Activated B cell treated with CpG ODN at 0.5 μM for 24 hours (primary cell): ENCODE measurements at regions of chr1 and their contacts with region 1.

Region 1: DNA sequence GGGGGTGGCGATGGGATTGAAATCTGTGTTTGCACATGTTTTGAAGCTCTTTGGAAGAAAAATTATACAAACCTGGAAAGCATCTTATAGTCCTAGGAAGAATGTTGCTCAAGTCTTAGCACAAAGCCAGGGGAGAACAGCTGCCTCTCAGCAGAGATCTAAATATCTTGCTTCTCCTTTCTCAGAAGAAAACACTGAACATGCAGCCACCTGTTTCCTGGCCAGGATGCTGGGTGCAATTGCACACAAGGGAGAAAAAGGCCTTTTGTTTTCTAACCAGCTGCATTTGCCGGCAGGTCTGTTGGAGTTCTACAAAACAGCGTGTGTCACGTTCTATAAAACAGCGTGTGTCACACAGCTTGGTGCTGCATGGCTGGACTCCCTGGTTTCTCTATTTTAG is 259.6 kb upstream of the PLD5 start:
- DNase-seq: no peak
- ATAC-seq: peak; percentile 80
- H3K4me3 Mint-ChIP-seq: peak overlapping the region; percentile 61
- H3K27ac Mint-ChIP-seq: peak overlapping the region; percentile 94
- H3K4me1 Mint-ChIP-seq: peaks cover 66% of the 10 kb centered on the region
- H3K27me3 Mint-ChIP-seq: no peaks in the 10 kb centered on the region
- CTCF ChIP-seq: no peak

Region 2: DNA sequence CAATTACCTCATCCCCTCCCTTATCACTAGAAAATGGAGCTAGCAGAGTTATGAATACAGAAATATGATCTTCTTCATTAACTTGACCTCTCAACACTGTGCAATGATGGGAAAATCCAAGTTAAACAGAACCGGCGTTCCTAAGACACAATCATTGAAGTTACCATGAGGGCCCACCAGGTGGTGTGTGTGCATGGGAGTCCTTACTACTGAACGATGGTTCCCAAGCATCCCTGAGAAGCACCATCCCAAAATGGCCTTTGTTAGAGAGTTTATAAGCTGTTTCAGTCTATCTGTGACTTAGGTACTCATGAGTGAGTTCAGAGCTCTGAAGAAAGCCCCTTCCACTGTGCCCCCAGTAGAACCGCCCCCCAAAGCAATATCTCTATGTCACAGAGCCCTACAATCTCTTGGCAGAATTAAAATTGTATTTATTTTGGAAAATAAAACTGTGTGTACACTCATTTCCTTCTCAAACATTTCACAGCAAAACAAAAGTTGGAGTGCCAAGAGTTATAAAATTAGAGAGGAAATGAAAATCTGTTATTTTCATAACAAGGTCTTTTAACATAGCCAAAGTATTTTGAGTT is 316.4 kb before region 1 on chr1:
- CTCF ChIA-PET with region 1: no interaction called
- POLR2A ChIA-PET with region 1: no interaction called
- intact Hi-C with region 1: loop called (anchors 5 kb)
- DNase-seq: no peak
- ATAC-seq: peak; percentile 37
- H3K4me3 Mint-ChIP-seq: no peak overlapping the region
- H3K27ac Mint-ChIP-seq: no peak overlapping the region
- H3K4me1 Mint-ChIP-seq: peaks cover 4% of the 10 kb centered on the region
- H3K27me3 Mint-ChIP-seq: peaks cover 9% of the 10 kb centered on the region
- CTCF ChIP-seq: no peak

Region 3: DNA sequence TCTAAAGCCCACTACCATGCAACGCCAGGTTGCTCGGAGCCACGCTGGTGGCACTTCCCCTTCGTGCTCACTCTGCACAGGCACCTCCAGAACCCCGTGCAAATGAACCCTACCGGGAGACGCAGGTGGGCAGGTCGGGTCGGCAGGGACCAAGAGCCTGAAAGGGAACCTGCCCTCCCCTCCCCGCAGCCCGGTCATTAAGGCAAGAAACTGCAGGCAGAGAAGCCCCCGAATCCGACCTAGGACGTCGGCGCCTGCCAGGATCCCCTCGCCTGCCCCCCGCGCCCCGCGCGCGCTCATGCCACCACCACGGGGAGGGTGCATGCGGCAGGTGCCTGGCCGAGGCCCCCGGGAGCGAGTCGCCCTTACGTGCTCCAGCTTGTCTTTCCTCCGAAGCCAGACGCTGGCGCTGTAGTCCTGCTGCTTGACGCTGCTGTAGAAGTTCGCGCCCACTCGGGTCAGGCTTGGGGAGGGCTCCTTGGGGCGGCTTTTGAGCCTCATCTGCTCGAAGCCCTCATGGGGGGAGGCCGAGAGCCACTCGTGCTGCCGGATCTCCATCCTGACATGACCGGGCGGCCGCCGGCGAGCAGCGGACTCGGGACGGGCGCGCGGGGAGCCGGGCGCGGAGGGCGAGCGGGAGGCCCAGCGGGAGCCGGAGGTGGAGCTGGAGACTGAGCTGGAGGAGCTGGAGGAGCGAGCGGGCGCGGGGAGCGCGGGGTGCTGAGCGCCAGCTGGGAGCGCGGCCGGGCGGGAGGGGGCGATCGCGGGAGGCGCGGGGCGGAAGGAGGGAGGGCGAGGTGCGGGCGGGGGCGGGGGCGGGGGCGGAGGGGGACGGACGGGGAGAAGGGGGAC is 260.1 kb before region 1 on chr1:
- CTCF ChIA-PET with region 1: no interaction called
- POLR2A ChIA-PET with region 1: no interaction called
- intact Hi-C with region 1: loop called (anchors 10 kb)
- DNase-seq: peak; percentile 24
- ATAC-seq: peak; percentile 62
- H3K4me3 Mint-ChIP-seq: peak overlapping the region; percentile 78
- H3K27ac Mint-ChIP-seq: no peak overlapping the region
- H3K4me1 Mint-ChIP-seq: peaks cover 20% of the 10 kb centered on the region
- H3K27me3 Mint-ChIP-seq: peaks cover 51% of the 10 kb centered on the region
- CTCF ChIP-seq: no peak

Region 4: DNA sequence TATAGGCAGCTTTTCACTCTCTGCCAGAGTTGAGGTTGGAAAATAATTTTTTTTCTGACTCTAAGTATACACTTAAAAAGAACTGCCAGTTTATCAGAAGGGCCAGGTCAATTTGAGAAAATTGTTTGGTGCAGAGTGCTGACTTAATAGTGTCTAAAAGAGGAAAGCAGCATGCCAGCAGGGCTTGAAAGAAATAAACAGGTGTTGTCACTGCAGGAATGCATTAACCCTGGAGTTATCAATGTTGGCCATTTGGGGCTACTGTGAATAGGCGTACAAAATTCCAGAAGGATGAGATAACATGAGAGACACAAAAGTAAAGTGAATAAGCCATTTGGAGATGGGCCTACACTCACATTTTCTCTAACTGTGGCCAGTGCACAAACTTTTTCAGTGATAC is 39.0 kb before region 1 on chr1:
- CTCF ChIA-PET with region 1: no interaction called
- POLR2A ChIA-PET with region 1: no interaction called
- intact Hi-C with region 1: no loop called
- DNase-seq: no peak
- ATAC-seq: no peak
- H3K4me3 Mint-ChIP-seq: no peak overlapping the region
- H3K27ac Mint-ChIP-seq: no peak overlapping the region
- H3K4me1 Mint-ChIP-seq: peaks cover 6% of the 10 kb centered on the region
- H3K27me3 Mint-ChIP-seq: no peaks in the 10 kb centered on the region
- CTCF ChIP-seq: no peak

Region 5: DNA sequence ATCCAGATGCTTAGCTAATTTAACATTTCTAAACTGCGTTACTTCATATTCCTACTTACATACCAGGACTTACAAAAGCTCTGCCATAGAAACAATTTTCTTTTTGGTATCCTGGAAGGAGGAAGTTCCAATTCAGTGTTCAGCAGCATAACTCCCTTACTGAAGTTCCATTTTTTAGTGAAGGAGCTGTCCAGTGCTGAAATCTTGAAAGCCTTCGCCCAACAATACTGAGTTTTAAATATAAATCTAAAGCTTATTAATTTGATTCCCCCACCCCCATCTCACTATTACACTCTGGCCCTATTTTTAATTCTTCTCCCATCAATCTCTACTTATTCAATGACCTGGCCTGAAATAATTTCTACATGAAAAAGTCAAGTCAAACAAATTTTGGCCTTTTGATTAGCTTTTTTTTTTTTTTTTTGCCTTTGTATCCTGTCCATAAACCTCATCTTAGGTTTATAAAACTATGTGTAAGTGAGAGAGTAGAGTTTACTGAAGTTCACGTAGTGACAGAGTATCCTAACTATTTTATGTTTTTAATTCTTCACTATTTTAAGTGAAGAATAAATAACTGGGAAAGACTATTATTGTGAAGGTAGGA is 63.4 kb after region 1 on chr1:
- CTCF ChIA-PET with region 1: no interaction called
- POLR2A ChIA-PET with region 1: no interaction called
- intact Hi-C with region 1: no loop called
- DNase-seq: no peak
- ATAC-seq: no peak
- H3K4me3 Mint-ChIP-seq: no peak overlapping the region
- H3K27ac Mint-ChIP-seq: no peak overlapping the region
- H3K4me1 Mint-ChIP-seq: no peaks in the 10 kb centered on the region
- H3K27me3 Mint-ChIP-seq: no peaks in the 10 kb centered on the region
- CTCF ChIP-seq: no peak